B cell (primary cell): ENCODE measurements at regions of chr19 and their contacts with region 1.

Region 1: DNA sequence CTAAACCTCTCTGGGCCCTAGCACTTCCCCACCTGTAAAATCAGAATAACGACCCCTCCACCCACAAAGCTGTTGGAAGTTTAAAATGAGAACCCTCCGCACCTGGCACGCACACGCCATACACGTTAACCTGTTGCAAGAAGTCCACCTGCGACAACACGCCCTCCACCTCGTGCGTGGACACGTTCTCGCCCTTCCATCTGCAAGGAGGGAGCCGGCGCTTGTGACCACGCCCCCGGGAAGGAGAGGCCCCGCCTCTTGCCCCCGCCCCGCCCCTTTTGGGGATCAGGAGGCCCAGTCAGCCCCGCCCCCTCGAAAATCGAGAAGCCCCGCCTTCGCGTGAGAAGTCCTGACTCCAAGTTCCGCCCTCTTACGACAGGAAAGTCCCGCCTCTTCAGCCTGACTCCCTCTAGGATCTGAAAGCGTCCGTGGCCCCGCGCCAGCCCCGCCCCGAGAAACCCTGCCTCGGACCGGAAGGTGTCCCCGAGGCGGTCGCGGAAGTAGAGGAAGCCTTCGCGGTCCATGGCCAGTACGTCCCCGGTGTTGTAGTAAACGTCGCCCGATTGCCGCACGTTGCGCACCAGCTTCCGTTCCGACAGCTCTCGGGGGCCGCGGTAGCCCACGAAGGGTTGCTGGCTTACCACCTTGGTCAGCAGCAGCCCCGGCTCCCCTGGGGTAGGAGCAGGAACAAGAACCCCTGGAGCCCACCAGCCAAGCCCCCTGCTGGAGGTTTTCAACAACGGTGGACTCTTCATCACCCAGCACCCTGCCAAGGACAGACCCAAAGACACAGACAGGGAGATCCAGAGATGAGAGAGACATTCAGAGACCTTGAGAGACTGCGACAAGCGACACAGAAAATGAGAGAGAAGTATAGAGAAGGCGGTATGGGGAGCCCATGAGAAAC is 12.5 kb downstream of the SLC27A5 start:
- DNase-seq: peak; percentile 96
- ATAC-seq: peak; percentile 89
- H3K4me3 ChIP-seq: peak overlapping the region; percentile 55 to 81 (median 69)
- H3K4me3 Mint-ChIP-seq: peak overlapping the region; percentile 91
- H3K27ac ChIP-seq: peak overlapping the region; percentile 74 to 85
- H3K27ac Mint-ChIP-seq: peak overlapping the region; percentile 93
- H3K4me1 ChIP-seq: peaks cover 9 to 20% of the 10 kb centered on the region in 2 donors
- H3K4me1 Mint-ChIP-seq: peaks cover 19% of the 10 kb centered on the region
- H3K27me3 ChIP-seq: no peaks in the 10 kb centered on the region
- H3K27me3 Mint-ChIP-seq: no peaks in the 10 kb centered on the region
- CTCF ChIP-seq: peak; percentile 45

Region 2: DNA sequence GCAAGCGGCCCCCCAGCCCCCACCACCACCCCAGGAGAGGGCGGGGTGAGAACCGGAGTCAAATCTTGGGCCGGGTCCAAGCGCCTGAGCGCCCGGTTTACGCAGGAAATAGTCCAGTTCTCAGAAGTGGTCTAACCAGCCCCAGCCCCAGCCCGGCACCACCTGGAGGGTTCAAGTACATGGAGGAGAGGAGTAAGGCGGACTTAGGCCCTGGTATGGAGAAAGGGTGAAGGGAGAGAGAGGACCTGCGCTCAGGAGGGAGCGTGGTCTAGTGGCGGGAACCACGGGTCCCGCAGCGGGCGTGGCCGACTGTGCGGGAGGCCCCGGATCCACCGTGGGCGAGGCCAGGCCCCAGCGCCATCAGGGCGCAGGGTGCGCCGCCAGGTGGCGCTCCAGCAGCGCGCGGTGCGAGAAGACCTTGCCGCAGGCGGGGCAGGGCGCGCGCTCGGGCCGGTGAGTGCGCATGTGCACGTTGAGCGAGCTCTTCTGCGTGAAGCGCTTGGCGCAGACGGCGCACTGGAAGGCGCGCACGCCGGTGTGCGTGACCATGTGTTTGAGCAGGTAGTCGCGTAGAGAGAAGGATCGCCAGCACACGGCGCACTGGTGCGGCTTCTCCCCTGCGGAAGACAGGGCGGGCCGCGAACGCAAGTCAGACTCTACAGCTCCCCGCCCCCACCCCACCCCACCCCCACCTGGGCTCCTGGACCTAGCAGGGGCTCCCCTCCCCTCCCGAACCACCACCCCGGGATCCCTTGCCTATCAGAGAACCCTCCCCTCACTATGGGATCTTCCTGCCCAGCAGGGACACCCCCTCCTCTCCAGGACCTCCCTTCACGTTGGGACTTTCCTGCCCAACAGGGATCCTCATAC is 14.7 kb after region 1 on chr19:
- CTCF ChIA-PET with region 1: interaction called, 19 read pairs
- POLR2A ChIA-PET with region 1: interaction called, 5 read pairs
- intact Hi-C with region 1: loop called (anchors 1 kb)
- DNase-seq: peak; percentile 91
- ATAC-seq: peak; percentile 86
- H3K4me3 ChIP-seq: peak overlapping the region in 3 of 5 experiments; percentile 18 to 41 (median 34)
- H3K4me3 Mint-ChIP-seq: peak overlapping the region; percentile 80
- H3K27ac ChIP-seq: peak overlapping the region; percentile 18 to 36
- H3K27ac Mint-ChIP-seq: peak overlapping the region; percentile 71
- H3K4me1 ChIP-seq: peaks cover 20 to 29% of the 10 kb centered on the region in 2 donors
- H3K4me1 Mint-ChIP-seq: peaks cover 34% of the 10 kb centered on the region
- H3K27me3 ChIP-seq: no peaks in the 10 kb centered on the region
- H3K27me3 Mint-ChIP-seq: no peaks in the 10 kb centered on the region
- CTCF ChIP-seq: peak; percentile 76

Region 3: DNA sequence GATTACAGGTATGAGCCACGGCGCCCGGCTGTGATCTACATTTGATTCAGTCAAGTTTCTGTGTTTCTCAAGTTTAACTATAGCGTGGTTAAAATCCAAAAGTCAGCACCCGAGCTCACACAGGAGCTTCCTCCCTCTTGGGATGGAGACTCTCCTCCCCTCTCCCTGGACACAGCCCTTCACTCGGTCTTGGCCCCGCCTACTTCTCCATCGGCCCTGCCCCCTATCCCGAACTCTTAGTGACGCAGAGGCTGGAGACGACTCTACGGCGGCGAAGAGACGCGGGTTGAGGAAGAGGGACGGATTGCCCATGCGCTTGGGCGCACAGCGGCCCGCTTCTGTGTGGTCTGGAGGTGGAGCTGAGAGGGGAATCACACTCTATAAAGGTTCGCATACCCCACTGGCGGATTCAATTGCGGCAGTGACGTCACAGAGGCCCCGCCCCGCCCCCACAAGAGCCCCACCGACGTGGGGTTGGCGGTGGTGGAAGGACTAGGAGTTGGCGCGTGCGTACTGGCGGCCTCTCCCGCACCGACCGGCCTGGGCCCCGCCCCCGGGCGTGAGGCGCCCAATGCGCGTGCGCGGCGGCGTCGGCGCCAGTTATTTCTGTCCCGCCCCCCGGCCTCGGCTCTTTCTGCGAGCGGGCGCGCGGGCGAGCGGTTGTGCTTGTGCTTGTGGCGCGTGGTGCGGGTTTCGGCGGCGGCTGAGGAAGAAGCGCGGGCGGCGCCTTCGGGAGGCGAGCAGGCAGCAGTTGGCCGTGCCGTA is 44.7 kb after region 1 on chr19 and contains the start of gene TRIM28:
- CTCF ChIA-PET with region 1: no interaction called
- POLR2A ChIA-PET with region 1: no interaction called
- intact Hi-C with region 1: loop called (anchors 1 kb)
- DNase-seq: peak; percentile 100
- ATAC-seq: peak; percentile 84
- H3K4me3 ChIP-seq: peak within 1 kb of the TSS; percentile 67 to 87 (median 82)
- H3K4me3 Mint-ChIP-seq: peak within 1 kb of the TSS; percentile 97
- H3K27ac ChIP-seq: peak within 1 kb of the TSS; percentile 96
- H3K27ac Mint-ChIP-seq: peak within 1 kb of the TSS; percentile 99
- H3K4me1 ChIP-seq: peaks cover 17 to 31% of the 10 kb centered on the region in 2 donors
- H3K4me1 Mint-ChIP-seq: peaks cover 29% of the 10 kb centered on the region
- H3K27me3 ChIP-seq: peaks cover 0 to 14% (median 0%) of the 10 kb centered on the region in 4 experiments
- H3K27me3 Mint-ChIP-seq: peaks cover 15% of the 10 kb centered on the region
- CTCF ChIP-seq: no peak
- total RNA-seq, gene TRIM28: 370 and 394 TPM in 2 replicates